Activated CD8-positive, alpha-beta T cell treated with anti-CD3 and anti-CD28 coated beads for 36 hours (primary cell): ENCODE measurements at regions of chr15 and their contacts with region 1.

Region 1: GRCh38 chr15:41915255-41915994 is 21.6 kb upstream of the SPTBN5 start:
- DNase-seq: no peak
- ATAC-seq: no peak
- H3K4me3 Mint-ChIP-seq: no peak overlapping the region
- H3K27ac Mint-ChIP-seq: no peak overlapping the region
- H3K4me1 Mint-ChIP-seq: peaks cover 4% of the 10 kb centered on the region
- H3K27me3 Mint-ChIP-seq: no peaks in the 10 kb centered on the region
- CTCF ChIP-seq: no peak

Region 2: DNA sequence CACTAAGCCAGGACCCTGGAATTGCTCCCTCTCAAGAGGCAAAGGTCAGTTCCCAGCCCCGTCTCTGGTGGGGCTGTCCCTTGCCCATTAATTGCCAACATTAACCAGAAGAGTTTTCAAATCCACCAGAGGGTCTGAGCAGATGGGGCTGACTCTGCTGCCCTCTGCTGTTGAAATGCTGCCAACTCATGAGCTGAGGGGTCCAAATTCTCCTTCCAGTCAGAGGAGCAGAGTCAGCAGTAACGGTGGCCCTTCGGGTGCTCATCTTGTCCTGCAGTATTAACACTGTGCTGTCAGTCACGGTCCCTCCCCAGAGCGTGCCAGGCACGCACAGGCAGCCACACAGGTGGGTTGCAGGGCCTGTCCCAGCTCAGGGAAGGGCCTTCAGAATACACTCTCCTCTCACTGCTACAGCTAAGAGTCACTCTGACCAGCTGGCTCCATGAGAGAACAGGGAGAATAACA is 10.9 kb before region 1 on chr15:
- CTCF ChIA-PET with region 1: interaction called, 21 read pairs
- POLR2A ChIA-PET with region 1: no interaction called
- intact Hi-C with region 1: no loop called
- DNase-seq: peak; percentile 83
- ATAC-seq: peak; percentile 95
- H3K4me3 Mint-ChIP-seq: no peak overlapping the region
- H3K27ac Mint-ChIP-seq: no peak overlapping the region
- H3K4me1 Mint-ChIP-seq: peaks cover 7% of the 10 kb centered on the region
- H3K27me3 Mint-ChIP-seq: no peaks in the 10 kb centered on the region
- CTCF ChIP-seq: peak; percentile 88